ENCODE measurements at regions of chr1 and their contacts with region 1.

Region 1: GRCh38 chr1:154558575-154559465 is at the start of gene UBE2Q1:
- DNase-seq: peak; percentile 99
- H3K4me3 ChIP-seq: peak within 1 kb of the TSS; percentile 96
- H3K27ac ChIP-seq: peak within 1 kb of the TSS; percentile 63
- H3K4me1 ChIP-seq: peaks cover 22% of the 10 kb centered on the region
- CTCF ChIP-seq: no peak
- total RNA-seq, gene UBE2Q1: 34.6 and 54.0 TPM in 2 replicates

Region 2: DNA sequence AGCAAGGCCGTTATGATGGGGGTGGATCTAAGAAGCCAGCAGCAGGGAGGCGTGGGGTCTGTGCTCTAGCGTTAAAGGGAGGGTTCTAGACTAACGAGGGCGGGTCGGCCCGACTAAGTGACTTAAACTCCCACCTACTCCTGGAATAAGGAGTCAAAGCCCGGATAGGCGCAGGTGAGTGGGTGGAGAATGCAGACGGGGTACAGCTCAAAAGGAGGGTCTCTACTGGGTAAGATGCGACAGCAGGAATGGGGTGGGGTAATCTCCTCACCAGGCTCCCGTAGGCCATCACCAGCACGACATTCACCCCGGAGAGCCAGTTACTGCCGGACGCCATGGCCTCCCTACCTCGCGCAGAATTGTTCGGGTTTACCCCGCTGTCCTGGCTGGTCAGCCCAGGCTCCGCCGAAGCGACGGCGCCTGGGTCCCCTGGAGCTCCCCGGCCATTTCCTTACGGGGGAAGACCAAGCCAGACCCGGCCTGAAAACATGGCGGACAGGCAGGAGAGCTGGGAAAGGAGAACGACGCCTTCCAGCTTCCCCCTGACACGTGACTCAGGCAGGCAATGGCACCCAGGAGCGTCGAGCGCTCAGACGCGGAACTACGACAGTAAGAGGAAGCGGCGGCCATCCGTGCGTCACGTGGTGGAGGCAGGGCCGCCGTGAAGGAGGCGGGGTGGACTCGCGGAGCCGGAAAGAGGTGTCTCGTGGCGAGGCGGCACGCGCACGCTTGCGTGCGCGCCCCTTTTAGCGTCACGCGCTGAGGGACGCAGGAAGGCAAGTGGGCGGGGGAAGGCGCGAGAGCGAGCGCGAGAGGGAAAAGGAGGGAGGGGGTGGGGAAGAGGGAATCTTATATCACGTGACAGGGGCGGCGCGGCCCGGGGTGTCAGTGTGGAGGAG is 338.5 kb before region 1 on chr1 and contains the start of gene UBAP2L:
- CTCF ChIA-PET with region 1: no interaction called
- POLR2A ChIA-PET with region 1: no interaction called
- intact Hi-C with region 1: loop called (anchors 2 kb)
- DNase-seq: peak; percentile 100
- H3K4me3 ChIP-seq: peak within 1 kb of the TSS; percentile 96
- H3K27ac ChIP-seq: peak within 1 kb of the TSS; percentile 75
- H3K4me1 ChIP-seq: peaks cover 41% of the 10 kb centered on the region
- CTCF ChIP-seq: no peak
- total RNA-seq, gene UBAP2L: 80.4 and 98.6 TPM in 2 replicates

Region 3: DNA sequence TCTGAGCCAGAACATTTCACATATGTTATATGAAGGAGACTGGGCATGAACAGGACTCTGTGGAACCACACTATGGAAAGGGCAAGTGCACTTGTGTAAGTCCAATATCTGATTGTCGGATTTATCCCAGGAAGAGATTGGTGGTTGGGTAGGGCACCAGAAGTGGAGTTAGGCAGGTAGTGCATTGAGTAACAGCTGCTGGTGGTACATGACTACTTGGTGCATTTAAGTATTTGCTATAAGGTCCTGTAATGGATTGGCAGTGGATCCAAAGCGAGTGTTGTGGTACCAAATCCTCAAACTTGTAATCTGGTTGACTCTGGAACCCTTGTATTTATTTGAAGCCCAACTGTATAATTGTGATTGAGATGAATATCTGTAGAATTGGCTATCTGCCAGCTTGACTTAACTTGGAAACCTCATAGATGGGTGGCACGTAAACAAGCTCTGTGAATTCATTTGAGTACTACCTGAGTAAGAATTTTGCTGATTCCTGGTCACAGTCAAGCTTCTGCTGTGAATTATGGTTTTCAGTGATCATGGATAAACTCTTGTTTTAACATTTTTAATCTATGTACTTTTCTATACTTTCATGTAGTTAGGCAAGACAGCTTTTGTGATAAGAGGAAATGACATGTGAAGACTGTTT is 317.0 kb before region 1 on chr1:
- CTCF ChIA-PET with region 1: no interaction called
- POLR2A ChIA-PET with region 1: no interaction called
- intact Hi-C with region 1: no loop called
- DNase-seq: no peak
- H3K4me3 ChIP-seq: no peak overlapping the region
- H3K27ac ChIP-seq: no peak overlapping the region
- H3K4me1 ChIP-seq: no peaks in the 10 kb centered on the region
- CTCF ChIP-seq: no peak

Region 4: DNA sequence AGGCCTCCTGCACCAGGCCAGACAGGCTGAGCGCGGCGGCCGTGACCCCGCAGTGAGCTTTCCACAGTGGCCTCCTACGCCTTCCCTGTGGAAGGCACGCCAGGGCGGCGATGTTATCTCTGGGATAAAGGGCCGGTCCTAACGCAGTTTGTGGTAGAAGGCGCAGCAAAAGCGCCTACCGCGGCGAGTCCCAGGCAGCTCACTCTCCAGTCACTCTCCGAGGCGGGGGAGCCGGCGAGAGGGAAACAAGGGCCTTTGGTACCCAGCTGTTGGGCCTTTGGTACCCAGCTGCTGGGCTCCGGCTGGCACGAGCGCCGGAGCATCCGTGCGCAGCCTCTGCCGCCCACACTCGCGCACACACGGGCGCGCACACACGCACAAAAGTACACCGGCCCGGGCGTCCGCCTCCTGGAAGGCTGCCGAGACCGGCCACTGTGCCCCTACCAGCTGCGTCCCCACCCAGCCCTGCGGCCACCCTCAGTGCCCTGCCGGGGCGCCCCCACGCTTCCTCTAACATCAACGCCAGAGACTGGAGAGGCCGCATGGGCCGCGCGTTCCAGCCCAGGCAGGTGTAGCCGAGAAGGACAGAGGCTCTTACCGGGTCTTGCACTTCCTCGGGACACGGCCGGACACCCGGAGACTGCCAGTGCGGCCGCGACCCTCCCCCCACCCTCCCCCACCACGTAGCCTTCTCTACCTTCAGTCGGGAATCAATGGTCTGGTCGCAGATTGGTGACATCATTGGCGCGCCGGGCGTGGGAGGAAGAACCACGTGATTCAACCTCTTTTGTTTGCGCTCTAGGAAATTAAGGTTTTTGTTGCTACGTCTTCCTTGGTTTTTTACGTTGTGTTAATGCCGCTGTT is 68.7 kb after region 1 on chr1:
- CTCF ChIA-PET with region 1: no interaction called
- POLR2A ChIA-PET with region 1: no interaction called
- intact Hi-C with region 1: loop called (anchors 1 kb)
- DNase-seq: peak; percentile 89
- H3K4me3 ChIP-seq: peak overlapping the region; percentile 92
- H3K27ac ChIP-seq: peak overlapping the region; percentile 48
- H3K4me1 ChIP-seq: peaks cover 14% of the 10 kb centered on the region
- CTCF ChIP-seq: peak; percentile 37; the same call in 1 of the 2 replicates

Region 5: GRCh38 chr1:154760469-154760933 is 201.7 kb after region 1 on chr1:
- CTCF ChIA-PET with region 1: no interaction called
- POLR2A ChIA-PET with region 1: no interaction called
- intact Hi-C with region 1: no loop called
- DNase-seq: peak; percentile 14
- H3K4me3 ChIP-seq: no peak overlapping the region
- H3K27ac ChIP-seq: no peak overlapping the region
- H3K4me1 ChIP-seq: no peaks in the 10 kb centered on the region
- CTCF ChIP-seq: peak; percentile 62

Region 6: GRCh38 chr1:154863315-154864174 is 304.7 kb after region 1 on chr1:
- CTCF ChIA-PET with region 1: interaction called, 3 read pairs
- POLR2A ChIA-PET with region 1: interaction called, 3 read pairs
- intact Hi-C with region 1: loop called (anchors 5 kb)
- DNase-seq: peak; percentile 83
- H3K4me3 ChIP-seq: peak overlapping the region; percentile 59
- H3K27ac ChIP-seq: peak overlapping the region; percentile 91
- H3K4me1 ChIP-seq: peaks cover 98% of the 10 kb centered on the region
- CTCF ChIP-seq: peak; percentile 93

Region 7: DNA sequence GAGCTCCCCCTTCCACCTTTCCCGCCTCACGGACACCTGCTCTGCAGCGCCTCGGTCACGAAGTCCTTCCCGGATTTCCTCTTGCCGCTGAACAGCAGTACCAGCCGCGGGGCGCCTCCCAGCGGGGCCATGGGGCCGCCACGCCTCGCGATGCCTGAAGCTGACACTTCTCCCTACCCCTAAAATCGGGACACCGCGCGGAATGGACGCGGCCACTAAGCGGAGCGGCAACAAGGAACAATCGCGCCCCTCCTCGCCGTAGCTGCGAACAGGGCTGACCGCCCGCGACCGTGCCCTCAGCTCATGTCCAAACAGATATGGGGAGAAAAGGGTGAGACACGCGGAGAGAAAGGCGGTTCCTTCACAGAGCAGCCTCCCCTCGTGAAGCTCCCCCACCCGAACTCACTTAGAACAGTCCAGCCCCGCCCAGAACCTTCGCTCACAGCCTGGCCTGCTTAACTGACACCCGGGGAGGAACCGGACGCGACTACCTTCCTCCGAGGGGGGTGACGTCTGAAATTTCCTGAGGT is 377.8 kb after region 1 on chr1 and contains the start of gene PMVK:
- CTCF ChIA-PET with region 1: no interaction called
- POLR2A ChIA-PET with region 1: no interaction called
- intact Hi-C with region 1: loop called (anchors 2 kb)
- DNase-seq: peak; percentile 97
- H3K4me3 ChIP-seq: peak within 1 kb of the TSS; percentile 74
- H3K27ac ChIP-seq: peak within 1 kb of the TSS; percentile 92
- H3K4me1 ChIP-seq: peaks cover 54% of the 10 kb centered on the region
- CTCF ChIP-seq: peak; percentile 74
- total RNA-seq, gene PMVK: 16.3 and 19.1 TPM in 2 replicates

Measured in OCI-LY7 (cell line).